ENCODE measurements at regions of chr10 and their contacts with region 1.

Region 1: DNA sequence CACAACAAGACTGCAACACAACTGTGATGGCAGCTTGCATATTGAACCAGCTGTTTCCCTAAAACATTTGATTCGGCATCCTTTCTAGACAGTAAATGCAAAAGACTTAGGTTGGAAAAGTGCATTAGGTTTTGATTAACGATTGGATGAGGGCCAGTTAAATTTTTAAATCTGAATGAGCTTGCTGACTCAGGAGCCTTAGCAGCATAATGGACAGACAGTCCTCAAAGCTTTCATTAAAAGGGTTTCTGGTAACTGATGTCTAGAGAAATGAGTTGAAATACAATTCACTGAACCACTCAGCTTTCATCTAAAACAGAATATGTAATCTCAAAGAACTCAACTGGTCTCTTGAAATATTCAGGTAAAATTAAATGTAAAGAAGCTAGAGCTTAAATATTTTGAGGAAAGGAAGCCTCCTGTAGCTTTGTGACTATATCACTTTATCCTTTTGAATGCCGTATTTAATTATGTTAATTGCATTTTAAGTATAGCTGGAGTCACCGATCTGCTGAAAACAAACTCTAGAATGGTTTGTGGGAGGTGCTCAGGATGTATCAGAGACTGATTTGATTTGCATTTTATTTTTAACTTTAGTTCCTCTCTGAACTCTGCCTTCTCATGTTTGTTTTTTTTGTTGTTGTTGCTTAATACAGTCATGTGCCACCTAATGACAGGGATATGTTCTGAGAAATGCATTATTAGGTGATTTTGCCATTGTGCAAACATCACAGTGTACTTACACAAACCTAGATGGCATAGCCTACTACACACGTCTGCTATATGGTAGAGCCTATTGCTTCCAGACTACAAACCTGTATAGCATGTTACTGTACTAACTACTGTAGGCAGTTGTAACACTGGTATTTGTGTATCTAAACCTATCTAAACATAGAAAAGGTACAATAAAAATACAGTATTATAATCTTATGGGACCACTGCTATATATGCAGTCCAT is 29.2 kb upstream of the ATRNL1 start:
- DNase-seq: peak; percentile 9
- H3K4me3 ChIP-seq: no peak overlapping the region
- H3K27me3 ChIP-seq: no peaks in the 10 kb centered on the region; the same call in 1 of the 2 replicates
- CTCF ChIP-seq: no peak

Region 2: DNA sequence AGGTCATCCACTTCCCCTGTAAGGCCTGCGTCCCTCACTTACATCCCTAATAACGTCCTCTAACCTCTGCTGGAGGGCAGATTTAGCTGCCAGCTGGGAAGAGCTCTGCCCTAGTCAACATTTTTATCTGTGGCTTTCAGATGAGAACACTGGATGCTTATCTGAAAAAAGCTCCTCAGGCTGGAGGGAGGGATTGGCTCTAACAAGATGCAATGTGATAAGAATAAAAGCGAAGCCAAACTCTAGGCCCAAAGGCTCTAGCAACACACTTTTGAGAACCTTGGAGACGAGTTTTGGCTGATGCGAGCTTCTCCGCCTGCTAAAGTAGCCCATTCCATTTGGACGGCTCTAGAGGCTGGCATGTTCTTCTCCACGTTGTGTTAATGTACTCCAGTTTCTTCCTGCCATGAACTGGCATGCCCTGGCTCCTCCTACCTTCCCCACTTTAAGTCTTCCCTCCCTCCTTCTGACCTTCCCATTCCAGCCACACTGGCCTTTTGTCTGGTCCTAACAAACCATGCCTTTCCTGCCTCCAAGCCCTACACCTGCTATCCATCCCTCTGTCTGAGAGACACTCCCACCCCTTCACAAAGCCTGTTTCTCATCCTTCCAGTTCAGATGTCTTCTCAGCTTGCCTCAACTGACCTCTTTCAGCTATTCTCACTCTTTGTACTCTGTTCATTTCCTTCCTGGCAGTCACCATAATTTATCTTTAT is 33.3 kb before region 1 on chr10:
- CTCF ChIA-PET with region 1: interaction called, 4 read pairs
- POLR2A ChIA-PET with region 1: interaction called, 32 read pairs
- DNase-seq: no peak
- H3K4me3 ChIP-seq: no peak overlapping the region
- H3K27me3 ChIP-seq: no peaks in the 10 kb centered on the region; the same call in 1 of the 2 replicates
- CTCF ChIP-seq: no peak

Region 3: DNA sequence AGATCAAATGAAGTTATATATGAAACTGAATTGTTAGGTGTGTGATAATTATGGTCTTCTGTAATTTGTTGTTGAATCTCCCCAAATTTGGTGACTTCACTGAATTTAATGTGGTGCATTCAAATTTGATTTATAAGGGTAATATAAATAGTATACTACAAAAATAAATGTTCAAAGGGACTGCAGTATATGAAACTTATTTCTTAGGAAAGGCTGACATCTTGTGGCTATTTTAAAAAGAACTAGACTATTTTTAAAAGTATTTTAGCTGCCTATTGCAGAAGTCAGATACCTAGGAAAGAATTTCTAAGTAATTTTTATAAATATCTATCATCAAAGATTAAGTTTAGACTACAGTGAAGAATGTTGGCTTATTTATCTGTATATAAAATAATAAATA is 65.8 kb after region 1 on chr10:
- CTCF ChIA-PET with region 1: no interaction called
- POLR2A ChIA-PET with region 1: no interaction called
- DNase-seq: no peak
- H3K4me3 ChIP-seq: no peak overlapping the region
- H3K27me3 ChIP-seq: no peaks in the 10 kb centered on the region
- CTCF ChIP-seq: no peak

Measured in BJ (cell line).